K562 (cell line): ENCODE measurements at regions of chr1 and their contacts with region 1.

Region 1: DNA sequence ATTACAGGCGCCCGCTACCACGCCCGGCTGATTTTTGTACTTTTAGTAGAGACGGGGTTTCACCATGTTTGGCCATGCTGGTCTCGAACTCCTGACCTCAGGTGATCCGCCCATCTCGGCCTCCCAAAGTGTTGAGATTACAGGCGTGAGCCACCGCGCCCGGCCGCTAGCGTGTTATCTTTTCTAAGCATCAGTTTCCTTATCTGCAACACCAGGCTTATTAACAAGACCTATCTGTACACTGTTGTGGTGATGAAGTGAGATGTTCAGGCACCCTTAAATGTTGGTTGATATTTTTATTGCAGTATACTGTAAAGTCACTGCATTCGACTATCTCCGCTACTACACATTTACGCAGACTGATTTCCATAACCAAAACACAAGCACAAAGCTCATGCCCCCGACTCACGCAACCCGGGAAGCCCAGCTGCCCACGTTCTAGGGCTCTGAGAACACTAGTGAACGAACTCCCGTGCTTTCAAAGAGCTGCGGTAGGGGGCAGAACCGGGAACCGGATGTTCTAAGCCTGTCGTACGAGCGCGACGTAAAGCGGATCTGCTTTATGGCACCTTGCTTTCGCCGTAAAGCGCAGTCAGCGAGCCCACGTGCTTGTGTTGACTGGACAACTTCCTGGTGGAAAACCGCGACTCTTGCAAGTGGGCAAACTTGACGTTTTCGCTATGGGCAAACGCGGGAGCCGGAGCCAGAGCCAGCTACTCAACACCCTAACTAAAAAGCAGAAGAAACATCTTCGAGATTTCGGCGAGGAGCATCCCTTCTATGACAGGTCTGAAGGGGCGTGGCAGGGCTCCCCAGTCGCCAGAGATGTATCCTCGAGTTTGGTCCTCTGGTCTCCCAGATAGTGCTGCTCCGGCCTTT is at the start of gene UTP25:
- DNase-seq: peak; percentile 87 to 99 (median 92)
- ATAC-seq: peak; percentile 92
- H3K4me3 ChIP-seq: peak within 1 kb of the TSS; percentile 89
- H3K27ac ChIP-seq: peak within 1 kb of the TSS; percentile 81
- H3K4me1 ChIP-seq: peaks cover 3 to 20% of the 10 kb centered on the region in 2 experiments; a peak in 4 of 5 replicates
- H3K27me3 ChIP-seq: peaks cover 0 to under 1% of the 10 kb centered on the region in 2 experiments; a peak in 1 of 5 replicates
- CTCF ChIP-seq: peak; percentile 79 to 91 (median 85)
- EP300 ChIP-seq: peak; percentile 7; the same call in 1 of the 2 replicates
- POLR2A ChIP-seq: peak; percentile 85
- RAD21 ChIP-seq: peak; percentile 48 to 55
- polyA plus RNA-seq, gene UTP25: 5.7 to 10.9 TPM

Region 2: DNA sequence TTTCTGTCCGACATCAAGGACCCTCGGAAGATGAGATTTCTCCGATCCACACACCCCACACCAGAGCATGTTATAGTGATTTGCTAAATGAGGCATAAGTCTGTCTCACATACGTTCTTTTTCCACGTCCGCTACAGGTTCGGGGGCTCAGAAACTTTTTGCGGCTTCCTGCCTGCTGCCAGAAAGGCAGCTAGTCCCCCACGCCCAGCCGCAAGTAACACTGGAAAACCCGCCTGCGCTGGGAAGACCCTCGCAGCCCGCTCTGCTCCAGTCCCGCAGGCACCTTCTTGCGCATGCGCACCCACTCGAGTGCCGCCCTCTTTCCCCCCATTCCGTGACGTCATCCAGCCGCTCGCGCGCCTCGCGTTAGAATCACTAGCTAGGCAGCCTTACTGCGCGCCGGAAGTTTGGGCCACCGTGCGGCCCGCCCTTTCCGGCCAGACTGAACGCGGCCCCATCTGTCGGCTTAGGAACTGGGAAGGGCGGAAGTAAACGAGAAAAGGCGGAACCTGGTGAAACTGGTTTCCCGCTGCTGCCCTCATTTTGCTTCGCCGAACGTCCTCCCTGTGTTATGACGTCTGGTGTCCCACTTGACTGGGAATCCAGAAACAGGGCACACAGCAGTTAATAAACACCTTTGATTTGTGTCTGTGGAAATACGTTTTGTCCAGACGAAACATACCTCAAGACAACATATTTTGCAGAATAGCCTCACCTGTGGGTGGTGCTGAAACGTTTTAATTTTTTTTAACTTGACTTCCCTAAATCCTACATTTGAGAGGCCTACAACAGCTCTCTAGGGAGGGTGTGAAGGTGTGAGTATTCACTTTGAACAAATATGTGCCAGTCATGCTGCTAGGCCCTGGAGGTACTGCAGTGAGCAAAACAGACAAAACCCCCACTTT is 43.1 kb before region 1 on chr1 and contains the start of gene C1orf74:
- CTCF ChIA-PET with region 1: interaction called, 3 read pairs
- POLR2A ChIA-PET with region 1: no interaction called
- in situ Hi-C with region 1: no loop called
- intact Hi-C with region 1: loop called (anchors 1 kb)
- DNase-seq: peak; percentile 99 to 100 (median 100)
- ATAC-seq: peak; percentile 100
- H3K4me3 ChIP-seq: peak within 1 kb of the TSS; percentile 60
- H3K27ac ChIP-seq: peak within 1 kb of the TSS; percentile 84
- H3K4me1 ChIP-seq: peaks cover 3 to 11% of the 10 kb centered on the region in 2 experiments; a peak in 3 of 5 replicates
- H3K27me3 ChIP-seq: peaks cover 0 to 10% of the 10 kb centered on the region in 2 experiments; a peak in 1 of 5 replicates
- CTCF ChIP-seq: peak in 2 of 3 experiments; percentile 14 to 34; a peak in 2 of 6 replicates
- EP300 ChIP-seq: peak; percentile 54; the same call in 1 of the 2 replicates
- POLR2A ChIP-seq: peak; percentile 98
- RAD21 ChIP-seq: no peak
- polyA plus RNA-seq, gene C1orf74: 5.7 to 7.6 TPM

Region 3: GRCh38 chr1:210647406-210648333 is 820.0 kb after region 1 on chr1:
- CTCF ChIA-PET with region 1: no interaction called
- POLR2A ChIA-PET with region 1: no interaction called
- in situ Hi-C with region 1: no loop called
- intact Hi-C with region 1: no loop called
- DNase-seq: no peak
- ATAC-seq: no peak
- H3K4me3 ChIP-seq: no peak overlapping the region
- H3K27ac ChIP-seq: no peak overlapping the region
- H3K4me1 ChIP-seq: no peaks in the 10 kb centered on the region
- H3K27me3 ChIP-seq: peaks cover 0 to 6% of the 10 kb centered on the region in 2 experiments; a peak in 2 of 5 replicates
- CTCF ChIP-seq: no peak
- EP300 ChIP-seq: no peak
- POLR2A ChIP-seq: no peak
- RAD21 ChIP-seq: no peak